ENCODE measurements at regions of chr7 and their contacts with region 1.

Region 1: DNA sequence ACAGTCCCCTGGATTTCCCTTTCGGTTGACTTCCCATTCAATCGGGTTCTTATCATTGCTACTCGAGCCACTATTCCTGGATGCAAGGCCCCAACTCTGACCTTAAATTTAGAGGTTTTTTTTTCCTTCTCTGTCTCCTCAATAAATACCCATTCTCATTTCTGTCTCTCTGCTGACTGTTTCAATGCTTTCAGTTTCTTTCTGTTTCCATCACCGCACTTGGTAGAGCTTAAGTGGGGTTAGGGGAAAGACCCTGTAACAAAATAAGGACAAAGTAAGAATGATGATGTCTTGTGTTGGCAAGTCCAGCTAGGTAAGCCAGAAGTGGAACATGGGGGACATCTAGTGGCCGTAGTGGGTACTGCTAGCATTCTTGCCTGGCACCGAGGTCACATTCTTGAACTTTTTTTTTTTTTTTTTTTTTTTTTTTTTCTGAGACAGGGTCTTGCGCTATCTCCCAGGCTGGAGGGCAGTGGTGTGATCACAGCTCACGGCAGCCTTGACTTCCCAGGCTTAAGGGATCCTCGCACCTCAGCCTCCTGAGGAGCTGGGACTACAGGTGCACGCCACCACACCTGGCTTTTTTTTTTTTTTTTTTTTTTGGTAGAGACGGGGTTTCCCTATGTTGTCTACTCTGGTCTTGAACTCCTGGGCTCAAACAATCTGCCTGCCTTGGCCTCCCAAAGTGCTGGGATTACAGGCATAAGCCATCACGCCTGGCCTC is 40.3 kb downstream of the ZC3HC1 start:
- DNase-seq: peak; percentile 86 to 96
- H3K4me3 ChIP-seq: no peak overlapping the region
- CTCF ChIP-seq: peak in 1 of 3 donors; percentile 76
- POLR2A ChIP-seq: no peak

Region 2: GRCh38 chr7:129829750-129830631 is 180.9 kb before region 1 on chr7:
- intact Hi-C with region 1: loop called (anchors 10 kb)
- DNase-seq: peak in 1 of 2 donors; percentile 93
- H3K4me3 ChIP-seq: no peak overlapping the region
- CTCF ChIP-seq: peak in 1 of 3 donors; percentile 50
- POLR2A ChIP-seq: no peak

Region 3: DNA sequence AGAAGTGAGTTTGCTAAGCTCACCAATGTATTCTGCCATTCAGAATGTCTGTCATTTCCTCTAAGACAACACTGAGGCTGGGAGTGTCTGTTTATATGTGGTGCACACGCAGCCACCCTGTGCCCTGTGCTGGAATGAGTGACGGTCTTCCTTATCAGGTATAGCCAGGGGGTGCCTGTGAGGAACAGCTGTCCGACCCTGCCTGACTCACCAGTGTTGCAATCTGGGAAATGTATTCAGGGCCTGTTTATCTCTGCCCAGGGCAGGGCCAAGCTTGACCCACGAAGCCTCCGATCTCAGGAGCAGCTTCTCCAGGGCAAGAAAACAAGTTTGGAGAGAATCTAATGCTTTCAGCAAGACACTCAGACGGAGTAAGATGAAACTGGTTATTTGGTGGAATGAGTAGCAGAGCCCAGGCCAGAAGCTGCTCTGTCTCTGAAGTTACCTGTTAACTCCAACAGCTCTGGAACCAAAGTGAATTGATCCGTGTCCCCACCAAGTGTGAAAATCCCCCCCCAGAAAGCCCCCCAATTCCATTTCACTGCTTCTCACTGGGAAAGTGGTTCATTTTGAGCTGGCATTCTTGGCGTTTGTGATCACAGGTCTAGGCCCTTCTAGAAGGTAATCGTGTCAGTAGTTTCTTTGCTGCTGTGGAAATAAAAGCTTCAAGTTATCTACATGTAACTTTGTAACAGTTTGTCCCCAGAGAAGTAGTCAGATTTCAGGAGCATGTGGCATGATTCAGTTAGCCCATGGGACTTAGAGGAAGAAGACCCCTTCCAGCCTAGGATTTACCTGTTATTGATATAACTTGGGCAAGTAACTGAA is 52.0 kb before region 1 on chr7:
- intact Hi-C with region 1: no loop called
- DNase-seq: no peak
- H3K4me3 ChIP-seq: no peak overlapping the region
- CTCF ChIP-seq: no peak
- POLR2A ChIP-seq: no peak

Measured in lower leg skin (tissue), 4 donors.